Ascending aorta (tissue), 2 donors: ENCODE measurements at regions of chr9 and their contacts with region 1.

Region 1: GRCh38 chr9:117782931-117783788 is 79.0 kb downstream of the TLR4 start:
- DNase-seq: peak in 1 of 2 donors; percentile 86
- H3K4me3 ChIP-seq: peak overlapping the region; percentile 47 to 57
- H3K27ac ChIP-seq: peak overlapping the region in 1 of 2 donors; percentile 27
- H3K4me1 ChIP-seq: peaks cover 0 to 14% of the 10 kb centered on the region in 2 donors
- H3K27me3 ChIP-seq: no peaks in the 10 kb centered on the region
- CTCF ChIP-seq: peak; percentile 64 to 82 (median 78)

Region 2: DNA sequence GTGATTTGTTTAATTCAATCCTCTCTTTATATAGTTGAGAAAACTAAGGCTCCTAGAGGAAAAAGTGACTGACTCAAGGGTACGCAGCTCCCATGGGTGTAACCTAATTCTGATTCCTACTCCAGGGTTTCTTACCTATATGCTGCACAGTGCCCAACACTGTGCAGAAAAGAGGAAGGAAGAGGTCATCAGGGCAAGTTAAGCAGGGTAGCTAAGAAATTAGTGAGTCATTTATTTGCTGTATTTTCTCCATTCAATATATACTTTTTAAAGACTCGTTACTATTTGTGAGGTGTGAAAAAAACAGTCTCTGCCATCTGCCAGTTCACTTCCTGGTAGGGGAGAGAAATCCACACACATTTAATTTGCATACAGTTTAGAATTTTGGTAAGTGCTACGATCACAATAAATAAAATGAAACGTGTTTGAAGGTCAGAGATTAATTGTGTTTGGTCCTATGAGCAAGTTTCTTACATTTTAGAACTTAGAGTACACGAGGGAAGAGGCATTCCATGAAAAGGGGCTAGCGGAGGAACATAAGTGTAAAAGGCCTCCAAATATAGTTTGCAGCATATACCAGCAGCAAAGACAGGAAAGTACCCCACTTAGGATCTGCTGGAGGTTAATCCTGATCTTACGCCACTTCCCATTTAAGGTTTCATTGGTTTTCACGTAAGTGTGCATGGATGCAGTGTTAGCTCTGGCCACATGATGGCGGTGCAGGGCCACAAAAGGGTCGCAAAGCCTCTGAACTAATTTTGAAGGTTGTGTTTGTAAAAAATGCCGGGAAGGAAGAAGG is 138.8 kb before region 1 on chr9:
- intact Hi-C with region 1: loop called (anchors 10 kb)
- DNase-seq: peak; percentile 11 to 82
- H3K4me3 ChIP-seq: peak overlapping the region in 1 of 2 donors; percentile 51
- H3K27ac ChIP-seq: no peak overlapping the region
- H3K4me1 ChIP-seq: peaks cover 0 to 5% of the 10 kb centered on the region in 2 donors
- H3K27me3 ChIP-seq: no peaks in the 10 kb centered on the region
- CTCF ChIP-seq: peak; percentile 78 to 97 (median 94)

Region 3: GRCh38 chr9:117821954-117822353 is 38.8 kb after region 1 on chr9:
- intact Hi-C with region 1: no loop called
- DNase-seq: no peak
- H3K4me3 ChIP-seq: no peak overlapping the region
- H3K27ac ChIP-seq: no peak overlapping the region
- H3K4me1 ChIP-seq: no peaks in the 10 kb centered on the region
- H3K27me3 ChIP-seq: no peaks in the 10 kb centered on the region
- CTCF ChIP-seq: no peak